IMR-90 (cell line): ENCODE measurements at regions of chr10 and their contacts with region 1.

Region 1: GRCh38 chr10:120948889-120949608 is 97.9 kb downstream of the WDR11 start:
- DNase-seq: peak; percentile 55
- ATAC-seq: peak; percentile 99
- H3K4me3 ChIP-seq: peak overlapping the region; percentile 31
- H3K27ac ChIP-seq: no peak overlapping the region
- H3K4me1 ChIP-seq: no peaks in the 10 kb centered on the region
- H3K27me3 ChIP-seq: peaks cover 14% of the 10 kb centered on the region
- CTCF ChIP-seq: peak; percentile 89
- POLR2A ChIP-seq: no peak
- RAD21 ChIP-seq: peak; percentile 86

Region 2: DNA sequence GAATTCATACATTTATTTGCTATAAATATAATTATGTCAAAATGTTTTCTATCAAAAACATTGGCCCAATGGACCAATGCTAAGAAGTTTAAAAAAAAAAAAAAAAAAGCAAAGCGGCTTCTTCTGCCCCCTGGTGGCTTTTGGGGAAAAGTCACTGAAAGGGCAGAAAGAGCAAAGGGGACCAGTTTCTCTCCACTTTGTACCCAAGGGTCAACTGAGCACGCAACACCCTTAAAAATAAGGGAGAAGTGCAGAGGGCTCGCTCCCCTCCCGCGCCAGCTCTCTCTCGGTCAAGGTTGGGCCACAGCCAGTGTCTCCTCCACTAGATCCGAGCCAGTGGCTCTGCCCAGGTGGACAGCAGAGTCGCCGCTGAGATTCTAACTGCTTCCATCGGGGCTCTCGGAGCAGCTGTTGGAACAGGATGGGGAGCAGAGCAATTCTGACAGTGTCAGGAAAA is 785.6 kb after region 1 on chr10:
- CTCF ChIA-PET with region 1: interaction called, 9 read pairs
- POLR2A ChIA-PET with region 1: no interaction called
- dilution Hi-C with region 1: no loop called
- in situ Hi-C with region 1: loop called (anchors 5 kb)
- intact Hi-C with region 1: loop called (anchors 1 kb)
- DNase-seq: no peak
- ATAC-seq: no peak; the same call in 1 of the 2 replicates
- H3K4me3 ChIP-seq: no peak overlapping the region
- H3K27ac ChIP-seq: no peak overlapping the region
- H3K4me1 ChIP-seq: no peaks in the 10 kb centered on the region
- H3K27me3 ChIP-seq: peaks cover 8% of the 10 kb centered on the region
- CTCF ChIP-seq: peak; percentile 65
- POLR2A ChIP-seq: no peak
- RAD21 ChIP-seq: peak; percentile 50

Region 3: GRCh38 chr10:121753726-121754476 is 804.9 kb after region 1 on chr10:
- CTCF ChIA-PET with region 1: no interaction called
- POLR2A ChIA-PET with region 1: no interaction called
- dilution Hi-C with region 1: no loop called
- in situ Hi-C with region 1: no loop called
- intact Hi-C with region 1: loop called (anchors 5 kb)
- DNase-seq: peak; percentile 87
- ATAC-seq: peak; percentile 92
- H3K4me3 ChIP-seq: no peak overlapping the region
- H3K27ac ChIP-seq: no peak overlapping the region
- H3K4me1 ChIP-seq: no peaks in the 10 kb centered on the region
- H3K27me3 ChIP-seq: no peaks in the 10 kb centered on the region
- CTCF ChIP-seq: peak; percentile 48
- POLR2A ChIP-seq: no peak
- RAD21 ChIP-seq: peak; percentile 24; the same call in 1 of the 2 replicates

Region 4: GRCh38 chr10:121886997-121887622 is 938.1 kb after region 1 on chr10:
- CTCF ChIA-PET with region 1: interaction called, 31 read pairs
- POLR2A ChIA-PET with region 1: no interaction called
- dilution Hi-C with region 1: no loop called
- in situ Hi-C with region 1: no loop called
- intact Hi-C with region 1: loop called (anchors 1 kb)
- DNase-seq: peak; percentile 69
- ATAC-seq: peak; percentile 97
- H3K4me3 ChIP-seq: no peak overlapping the region
- H3K27ac ChIP-seq: no peak overlapping the region
- H3K4me1 ChIP-seq: no peaks in the 10 kb centered on the region
- H3K27me3 ChIP-seq: no peaks in the 10 kb centered on the region
- CTCF ChIP-seq: peak; percentile 87
- POLR2A ChIP-seq: no peak
- RAD21 ChIP-seq: peak; percentile 79

Region 5: GRCh38 chr10:121900443-121901174 is 951.6 kb after region 1 on chr10:
- CTCF ChIA-PET with region 1: interaction called, 11 read pairs
- POLR2A ChIA-PET with region 1: no interaction called
- dilution Hi-C with region 1: no loop called
- in situ Hi-C with region 1: loop called (anchors 5 kb)
- intact Hi-C with region 1: loop called (anchors 1 kb)
- DNase-seq: peak; percentile 71
- ATAC-seq: peak; percentile 88
- H3K4me3 ChIP-seq: no peak overlapping the region
- H3K27ac ChIP-seq: no peak overlapping the region
- H3K4me1 ChIP-seq: no peaks in the 10 kb centered on the region
- H3K27me3 ChIP-seq: no peaks in the 10 kb centered on the region
- CTCF ChIP-seq: peak; percentile 68
- POLR2A ChIP-seq: no peak
- RAD21 ChIP-seq: peak; percentile 69